CD4-positive, alpha-beta T cell (primary cell): ENCODE measurements at regions of chr1 and their contacts with region 1.

Region 1: DNA sequence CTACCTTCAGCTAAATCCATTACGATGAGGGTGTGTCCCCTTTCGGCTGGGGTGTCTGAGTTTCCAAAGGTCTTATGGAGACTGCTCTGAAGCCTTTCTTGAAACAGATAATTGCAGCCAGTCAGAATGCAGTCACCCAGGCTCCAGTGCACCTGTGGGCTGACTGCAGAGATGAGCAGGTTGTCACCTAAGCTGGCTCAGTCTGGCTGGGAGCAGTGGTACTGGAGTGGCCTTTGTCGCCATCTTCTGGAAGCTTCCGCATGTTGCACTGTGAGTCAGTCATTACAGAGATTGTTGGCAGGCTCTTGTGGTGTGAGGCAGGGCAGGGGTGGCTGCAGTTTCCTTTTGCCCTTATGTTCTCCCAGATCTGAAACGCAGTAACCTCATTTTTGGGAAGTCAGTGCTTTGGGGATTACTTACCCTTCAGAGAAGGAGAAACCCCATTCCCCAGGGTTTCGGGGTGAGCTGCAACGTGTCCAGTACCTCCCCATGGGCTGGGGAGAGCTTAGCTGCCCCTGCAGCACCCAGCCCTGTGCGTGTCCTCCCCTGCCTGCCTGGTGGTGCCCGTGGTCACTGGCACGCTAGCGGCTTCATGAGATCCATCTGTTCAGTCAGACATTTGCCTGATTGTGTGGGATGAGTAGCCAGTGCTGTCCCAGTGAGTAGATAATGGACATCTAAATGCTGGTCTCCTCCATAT is 48.0 kb downstream of the SMYD2 start:
- DNase-seq: peak; percentile 66 to 87 (median 72)
- ATAC-seq: peak; percentile 98
- H3K4me3 ChIP-seq: no peak overlapping the region
- H3K4me3 Mint-ChIP-seq: no peak overlapping the region
- H3K27ac ChIP-seq: no peak overlapping the region
- H3K27ac Mint-ChIP-seq: peak overlapping the region; percentile 53
- H3K4me1 ChIP-seq: no peaks in the 10 kb centered on the region
- H3K4me1 Mint-ChIP-seq: no peaks in the 10 kb centered on the region
- H3K27me3 ChIP-seq: no peaks in the 10 kb centered on the region
- H3K27me3 Mint-ChIP-seq: no peaks in the 10 kb centered on the region
- CTCF ChIP-seq: peak; percentile 83

Region 2: GRCh38 chr1:213244664-213245091 is 1084.2 kb before region 1 on chr1:
- CTCF ChIA-PET with region 1: no interaction called
- POLR2A ChIA-PET with region 1: no interaction called
- intact Hi-C with region 1: loop called in 1 of 2 experiments (anchors 5 kb)
- DNase-seq: peak in 5 of 14 experiments; percentile 2 to 62 (median 38)
- ATAC-seq: no peak
- H3K4me3 ChIP-seq: no peak overlapping the region
- H3K4me3 Mint-ChIP-seq: no peak overlapping the region
- H3K27ac ChIP-seq: no peak overlapping the region
- H3K27ac Mint-ChIP-seq: no peak overlapping the region
- H3K4me1 ChIP-seq: no peaks in the 10 kb centered on the region
- H3K4me1 Mint-ChIP-seq: no peaks in the 10 kb centered on the region
- H3K27me3 ChIP-seq: no peaks in the 10 kb centered on the region
- H3K27me3 Mint-ChIP-seq: no peaks in the 10 kb centered on the region
- CTCF ChIP-seq: peak; percentile 98

Region 3: GRCh38 chr1:213661302-213661701 is 667.6 kb before region 1 on chr1:
- CTCF ChIA-PET with region 1: no interaction called
- POLR2A ChIA-PET with region 1: no interaction called
- intact Hi-C with region 1: loop called in 1 of 2 experiments (anchors 5 kb)
- DNase-seq: no peak
- ATAC-seq: no peak
- H3K4me3 ChIP-seq: no peak overlapping the region
- H3K4me3 Mint-ChIP-seq: no peak overlapping the region
- H3K27ac ChIP-seq: no peak overlapping the region
- H3K27ac Mint-ChIP-seq: no peak overlapping the region
- H3K4me1 ChIP-seq: no peaks in the 10 kb centered on the region
- H3K4me1 Mint-ChIP-seq: no peaks in the 10 kb centered on the region
- H3K27me3 ChIP-seq: no peaks in the 10 kb centered on the region
- H3K27me3 Mint-ChIP-seq: peaks cover 7% of the 10 kb centered on the region
- CTCF ChIP-seq: no peak

Region 4: DNA sequence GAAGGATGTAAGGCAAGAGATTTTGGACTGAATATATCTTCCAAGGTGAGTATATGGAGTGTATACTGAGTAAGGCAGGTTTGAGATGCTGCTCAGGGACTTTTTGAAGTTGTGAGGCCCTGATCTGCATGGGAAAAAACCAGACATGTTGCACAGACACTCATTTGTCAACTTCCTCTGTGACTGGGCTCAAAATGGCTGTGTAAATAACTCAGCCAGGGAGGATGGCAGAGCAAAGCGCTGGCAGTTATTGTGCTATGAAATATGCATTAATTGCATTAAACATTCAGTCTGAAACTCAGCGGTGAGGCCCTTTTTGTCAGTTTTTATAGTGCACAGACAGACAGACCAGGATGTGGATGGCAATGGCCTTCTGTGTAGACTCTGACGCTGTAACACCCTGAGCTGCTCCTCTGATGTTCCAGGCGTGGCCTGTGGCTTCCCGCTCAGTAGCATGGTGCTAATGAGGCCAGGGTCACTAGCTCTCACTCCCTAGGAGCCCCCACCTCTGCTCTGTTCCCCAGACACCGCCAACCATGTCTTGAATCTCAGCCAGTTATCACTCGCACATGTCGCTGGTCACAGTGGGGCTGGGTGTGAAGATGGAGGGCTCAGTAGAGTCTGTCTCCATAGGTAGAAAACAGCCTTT is 648.1 kb before region 1 on chr1:
- CTCF ChIA-PET with region 1: no interaction called
- POLR2A ChIA-PET with region 1: no interaction called
- intact Hi-C with region 1: no loop called
- DNase-seq: no peak
- ATAC-seq: no peak
- H3K4me3 ChIP-seq: no peak overlapping the region
- H3K4me3 Mint-ChIP-seq: no peak overlapping the region
- H3K27ac ChIP-seq: no peak overlapping the region
- H3K27ac Mint-ChIP-seq: no peak overlapping the region
- H3K4me1 ChIP-seq: no peaks in the 10 kb centered on the region
- H3K4me1 Mint-ChIP-seq: no peaks in the 10 kb centered on the region
- H3K27me3 ChIP-seq: no peaks in the 10 kb centered on the region
- H3K27me3 Mint-ChIP-seq: no peaks in the 10 kb centered on the region
- CTCF ChIP-seq: no peak

Region 5: DNA sequence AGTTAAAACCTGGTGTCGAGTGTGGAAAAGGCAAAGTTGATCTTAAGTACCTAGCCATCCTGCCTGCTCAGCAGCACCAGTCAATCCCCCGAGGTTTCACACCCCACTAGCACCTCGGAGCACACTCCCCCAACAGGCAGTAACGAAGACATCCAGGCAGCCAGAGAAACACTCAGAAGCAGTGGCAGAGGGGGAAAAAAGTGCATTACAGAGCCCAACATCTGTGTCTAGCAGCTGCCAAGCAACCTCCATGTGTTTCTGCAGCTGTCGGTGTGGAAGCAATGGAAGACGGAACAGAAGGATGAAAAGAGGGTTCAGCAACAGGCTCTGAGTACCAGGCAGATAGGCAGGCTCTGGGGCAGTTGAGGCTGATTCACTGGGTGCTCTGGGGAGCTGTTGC is 414.5 kb before region 1 on chr1:
- CTCF ChIA-PET with region 1: no interaction called
- POLR2A ChIA-PET with region 1: no interaction called
- intact Hi-C with region 1: no loop called
- DNase-seq: no peak
- ATAC-seq: no peak
- H3K4me3 ChIP-seq: no peak overlapping the region
- H3K4me3 Mint-ChIP-seq: no peak overlapping the region
- H3K27ac ChIP-seq: no peak overlapping the region
- H3K27ac Mint-ChIP-seq: no peak overlapping the region
- H3K4me1 ChIP-seq: no peaks in the 10 kb centered on the region
- H3K4me1 Mint-ChIP-seq: no peaks in the 10 kb centered on the region
- H3K27me3 ChIP-seq: no peaks in the 10 kb centered on the region
- H3K27me3 Mint-ChIP-seq: no peaks in the 10 kb centered on the region
- CTCF ChIP-seq: no peak

Region 6: GRCh38 chr1:214213136-214213535 is 115.8 kb before region 1 on chr1:
- CTCF ChIA-PET with region 1: interaction called, 5 read pairs
- POLR2A ChIA-PET with region 1: no interaction called
- intact Hi-C with region 1: loop called (anchors 1 to 2 kb)
- DNase-seq: no peak
- ATAC-seq: no peak
- H3K4me3 ChIP-seq: no peak overlapping the region
- H3K4me3 Mint-ChIP-seq: no peak overlapping the region
- H3K27ac ChIP-seq: no peak overlapping the region
- H3K27ac Mint-ChIP-seq: no peak overlapping the region
- H3K4me1 ChIP-seq: peaks cover 3% of the 10 kb centered on the region
- H3K4me1 Mint-ChIP-seq: peaks cover 5% of the 10 kb centered on the region
- H3K27me3 ChIP-seq: peaks cover 4 to 6% of the 10 kb centered on the region in 2 experiments
- H3K27me3 Mint-ChIP-seq: peaks cover 30% of the 10 kb centered on the region
- CTCF ChIP-seq: no peak

Region 7: DNA sequence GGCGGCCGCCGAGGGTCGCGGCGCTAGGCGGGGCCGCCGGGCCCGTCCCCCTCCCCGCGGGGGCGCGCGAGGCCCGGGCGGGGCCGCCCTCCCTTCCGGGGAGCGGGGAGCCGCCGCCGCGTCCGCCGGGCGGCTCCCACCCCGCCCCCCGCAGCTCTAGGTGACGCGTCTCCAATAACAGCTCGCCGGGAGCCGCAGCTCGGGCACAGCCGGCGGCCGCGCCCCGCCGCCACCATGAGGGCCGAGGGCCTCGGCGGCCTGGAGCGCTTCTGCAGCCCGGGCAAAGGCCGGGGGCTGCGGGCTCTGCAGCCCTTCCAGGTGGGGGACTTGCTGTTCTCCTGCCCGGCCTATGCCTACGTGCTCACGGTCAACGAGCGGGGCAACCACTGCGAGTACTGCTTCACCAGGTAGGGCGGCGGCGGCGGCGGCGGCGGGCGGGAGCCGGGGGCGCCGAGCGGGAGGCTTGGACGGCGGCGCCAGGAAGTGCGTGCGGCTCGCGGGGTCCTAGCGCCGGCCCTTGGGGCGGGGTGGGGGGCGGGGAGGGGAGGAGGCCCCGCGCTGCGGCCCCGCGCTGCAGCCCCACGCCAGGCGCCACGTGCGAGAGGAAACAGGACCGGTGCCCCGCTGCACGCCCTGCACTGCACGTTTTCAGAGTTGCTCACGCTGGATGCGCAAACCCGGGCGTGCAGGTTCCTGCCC is 47.8 kb before region 1 on chr1 and contains the start of gene SMYD2:
- CTCF ChIA-PET with region 1: interaction called, 11 read pairs
- POLR2A ChIA-PET with region 1: interaction called, 10 read pairs
- intact Hi-C with region 1: loop called in 1 of 2 experiments (anchors 5 kb)
- DNase-seq: peak; percentile 48 to 87 (median 68)
- ATAC-seq: peak; percentile 78
- H3K4me3 ChIP-seq: peak within 1 kb of the TSS; percentile 89
- H3K4me3 Mint-ChIP-seq: peak within 1 kb of the TSS; percentile 93
- H3K27ac ChIP-seq: peak within 1 kb of the TSS; percentile 37 to 65
- H3K27ac Mint-ChIP-seq: peak within 1 kb of the TSS; percentile 84
- H3K4me1 ChIP-seq: peaks cover 21% of the 10 kb centered on the region
- H3K4me1 Mint-ChIP-seq: peaks cover 50% of the 10 kb centered on the region
- H3K27me3 ChIP-seq: no peaks in the 10 kb centered on the region
- H3K27me3 Mint-ChIP-seq: no peaks in the 10 kb centered on the region
- CTCF ChIP-seq: no peak
- total RNA-seq, gene SMYD2: 17.1 to 17.6 TPM

Region 8: GRCh38 chr1:214354440-214355148 is 25.7 kb after region 1 on chr1:
- CTCF ChIA-PET with region 1: no interaction called
- POLR2A ChIA-PET with region 1: no interaction called
- intact Hi-C with region 1: no loop called
- DNase-seq: no peak
- ATAC-seq: no peak
- H3K4me3 ChIP-seq: no peak overlapping the region
- H3K4me3 Mint-ChIP-seq: no peak overlapping the region
- H3K27ac ChIP-seq: no peak overlapping the region
- H3K27ac Mint-ChIP-seq: no peak overlapping the region
- H3K4me1 ChIP-seq: no peaks in the 10 kb centered on the region
- H3K4me1 Mint-ChIP-seq: no peaks in the 10 kb centered on the region
- H3K27me3 ChIP-seq: no peaks in the 10 kb centered on the region
- H3K27me3 Mint-ChIP-seq: no peaks in the 10 kb centered on the region
- CTCF ChIP-seq: no peak

Region 9: GRCh38 chr1:214377886-214378285 is 49.0 kb after region 1 on chr1:
- CTCF ChIA-PET with region 1: no interaction called
- POLR2A ChIA-PET with region 1: no interaction called
- intact Hi-C with region 1: no loop called
- DNase-seq: no peak
- ATAC-seq: no peak
- H3K4me3 ChIP-seq: no peak overlapping the region
- H3K4me3 Mint-ChIP-seq: no peak overlapping the region
- H3K27ac ChIP-seq: no peak overlapping the region
- H3K27ac Mint-ChIP-seq: no peak overlapping the region
- H3K4me1 ChIP-seq: no peaks in the 10 kb centered on the region
- H3K4me1 Mint-ChIP-seq: no peaks in the 10 kb centered on the region
- H3K27me3 ChIP-seq: no peaks in the 10 kb centered on the region
- H3K27me3 Mint-ChIP-seq: no peaks in the 10 kb centered on the region
- CTCF ChIP-seq: no peak

Region 10: DNA sequence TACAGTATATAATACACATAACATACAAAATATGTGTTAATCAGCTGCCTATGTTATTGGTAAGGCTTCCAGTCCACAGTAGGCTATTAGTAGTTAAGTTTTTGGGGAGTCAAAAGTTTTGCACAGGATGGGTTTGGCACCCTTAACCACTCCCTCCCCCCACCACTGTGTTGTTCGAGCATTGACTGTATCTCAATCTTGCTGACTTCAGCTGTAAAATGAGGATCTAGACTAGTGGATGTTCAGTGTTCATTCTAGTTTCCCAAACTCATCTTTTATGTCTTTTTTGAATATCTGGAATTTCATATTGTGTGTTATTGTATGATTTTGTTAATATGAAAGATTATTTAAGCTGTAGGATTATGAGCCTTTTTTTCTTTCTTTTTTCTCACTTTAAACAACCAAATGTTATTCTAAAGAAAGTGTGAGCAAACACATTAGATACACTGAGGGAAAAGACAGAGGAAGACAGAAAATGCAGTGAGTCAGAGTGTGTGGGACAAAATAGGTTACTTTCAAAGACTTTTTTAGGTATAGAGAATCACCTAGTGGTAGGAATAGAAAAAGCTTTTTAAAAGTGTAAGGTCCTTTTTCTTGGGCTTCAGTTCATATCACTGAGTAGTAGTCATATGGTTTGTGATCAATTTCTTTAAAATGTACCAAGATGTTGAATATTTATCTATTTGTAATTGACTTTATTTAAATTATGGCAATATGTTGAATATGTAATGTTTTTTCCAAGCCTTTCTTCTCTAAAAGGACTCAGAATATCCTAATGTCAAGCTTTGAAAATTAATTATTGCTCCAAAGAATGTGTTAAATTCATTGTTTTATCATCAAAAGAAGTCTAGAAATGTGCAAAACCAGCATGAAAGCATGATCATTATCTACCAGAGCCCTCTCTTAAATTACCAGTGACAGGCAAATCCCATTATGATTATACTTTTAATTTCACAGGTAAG is 256.2 kb after region 1 on chr1:
- CTCF ChIA-PET with region 1: no interaction called
- POLR2A ChIA-PET with region 1: no interaction called
- intact Hi-C with region 1: loop called (anchors 2 to 5 kb)
- DNase-seq: peak in 2 of 14 experiments; percentile 2 to 5
- ATAC-seq: peak; percentile 49
- H3K4me3 ChIP-seq: no peak overlapping the region
- H3K4me3 Mint-ChIP-seq: no peak overlapping the region
- H3K27ac ChIP-seq: no peak overlapping the region
- H3K27ac Mint-ChIP-seq: no peak overlapping the region
- H3K4me1 ChIP-seq: no peaks in the 10 kb centered on the region
- H3K4me1 Mint-ChIP-seq: no peaks in the 10 kb centered on the region
- H3K27me3 ChIP-seq: peaks cover 0 to 2% of the 10 kb centered on the region in 2 experiments
- H3K27me3 Mint-ChIP-seq: peaks cover 4% of the 10 kb centered on the region
- CTCF ChIP-seq: peak; percentile 57

Region 11: GRCh38 chr1:215526553-215527151 is 1197.7 kb after region 1 on chr1:
- CTCF ChIA-PET with region 1: interaction called, 4 read pairs
- POLR2A ChIA-PET with region 1: no interaction called
- intact Hi-C with region 1: loop called (anchors 1 to 2 kb)
- DNase-seq: peak in 3 of 14 experiments; percentile 44 to 66 (median 63)
- ATAC-seq: peak; percentile 41
- H3K4me3 ChIP-seq: no peak overlapping the region
- H3K4me3 Mint-ChIP-seq: no peak overlapping the region
- H3K27ac ChIP-seq: no peak overlapping the region
- H3K27ac Mint-ChIP-seq: no peak overlapping the region
- H3K4me1 ChIP-seq: no peaks in the 10 kb centered on the region
- H3K4me1 Mint-ChIP-seq: peaks cover 5% of the 10 kb centered on the region
- H3K27me3 ChIP-seq: peaks cover 0 to 7% of the 10 kb centered on the region in 2 experiments
- H3K27me3 Mint-ChIP-seq: peaks cover 29% of the 10 kb centered on the region
- CTCF ChIP-seq: peak; percentile 74